ENCODE measurements at regions of chr1 and their contacts with region 1.

Region 1: DNA sequence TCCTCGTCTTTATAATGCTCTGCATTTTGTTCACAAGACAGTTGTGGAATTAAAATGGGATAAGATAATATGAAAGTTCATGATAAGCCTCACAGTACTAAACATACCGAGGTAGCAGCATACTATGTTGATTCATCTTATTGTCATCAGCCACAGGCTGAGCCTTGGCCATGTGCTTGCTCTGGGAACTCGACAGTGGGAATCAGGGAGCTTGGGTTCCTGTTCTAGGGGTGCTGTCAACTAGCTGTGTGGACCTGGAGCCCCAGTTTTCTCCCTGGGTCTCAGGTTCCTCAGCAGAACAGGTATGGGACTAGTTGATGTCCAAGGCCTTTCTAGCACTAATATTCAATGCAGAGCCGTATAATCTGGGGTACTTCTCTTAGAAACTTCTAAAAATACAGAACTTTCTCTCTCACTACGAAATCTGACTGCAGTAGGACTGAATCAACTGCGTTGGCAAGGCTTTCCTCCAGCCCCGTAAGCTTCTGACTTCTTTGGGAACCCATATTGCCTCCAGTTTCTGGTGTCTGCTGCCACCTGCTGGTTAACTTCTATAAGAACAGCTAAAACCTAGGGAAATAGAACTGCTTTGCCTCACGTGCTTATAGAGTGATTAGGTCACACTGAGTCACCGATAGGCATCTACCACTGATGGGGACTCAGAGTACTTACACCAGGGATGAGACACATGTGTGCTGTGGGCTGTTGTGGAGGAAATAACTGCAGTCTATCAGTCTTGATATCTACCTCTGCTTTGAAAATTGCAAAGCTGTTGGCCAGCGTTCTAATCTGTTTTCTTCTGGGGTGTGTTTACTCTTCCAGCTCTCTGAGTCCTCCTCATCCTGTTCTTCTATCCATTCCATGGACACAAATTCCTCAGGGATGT is 110.9 kb downstream of the RGL1 start:
- DNase-seq: peak; percentile 83
- H3K4me3 Mint-ChIP-seq: no peak overlapping the region
- H3K27ac Mint-ChIP-seq: peak overlapping the region; percentile 46
- H3K4me1 Mint-ChIP-seq: peaks cover 13% of the 10 kb centered on the region
- H3K27me3 Mint-ChIP-seq: no peaks in the 10 kb centered on the region

Region 2: DNA sequence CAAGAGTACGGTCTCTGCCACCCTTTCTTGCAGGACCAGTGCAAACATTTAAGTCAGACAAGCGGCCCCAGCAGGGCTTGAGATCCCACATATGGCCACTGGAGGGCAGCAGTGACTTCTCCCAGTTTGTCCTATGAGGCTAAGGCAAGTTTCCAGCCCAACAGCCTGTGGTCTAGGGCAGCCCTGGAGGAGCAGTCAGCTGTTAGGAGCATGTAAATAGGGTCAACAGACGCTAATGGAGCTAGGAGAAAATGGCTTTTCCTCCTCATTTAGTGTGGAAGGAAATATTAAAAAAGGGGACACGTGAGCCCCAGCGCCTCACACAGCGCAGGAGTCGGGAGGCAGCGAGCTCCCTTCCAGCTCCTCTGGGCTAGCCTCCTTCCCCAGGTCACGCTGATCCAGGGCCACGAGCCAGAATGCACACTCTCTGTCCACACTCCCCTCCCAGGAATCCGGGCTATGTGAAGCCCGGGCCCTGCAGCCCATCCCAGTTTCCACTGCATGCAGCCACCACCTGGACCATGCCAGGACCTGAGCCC is 634.2 kb before region 1 on chr1:
- CTCF ChIA-PET with region 1: interaction called, 4 read pairs
- POLR2A ChIA-PET with region 1: no interaction called
- intact Hi-C with region 1: loop called (anchors 1 kb)
- DNase-seq: peak; percentile 86
- H3K4me3 Mint-ChIP-seq: no peak overlapping the region
- H3K27ac Mint-ChIP-seq: no peak overlapping the region
- H3K4me1 Mint-ChIP-seq: no peaks in the 10 kb centered on the region
- H3K27me3 Mint-ChIP-seq: peaks cover 5% of the 10 kb centered on the region

Region 3: DNA sequence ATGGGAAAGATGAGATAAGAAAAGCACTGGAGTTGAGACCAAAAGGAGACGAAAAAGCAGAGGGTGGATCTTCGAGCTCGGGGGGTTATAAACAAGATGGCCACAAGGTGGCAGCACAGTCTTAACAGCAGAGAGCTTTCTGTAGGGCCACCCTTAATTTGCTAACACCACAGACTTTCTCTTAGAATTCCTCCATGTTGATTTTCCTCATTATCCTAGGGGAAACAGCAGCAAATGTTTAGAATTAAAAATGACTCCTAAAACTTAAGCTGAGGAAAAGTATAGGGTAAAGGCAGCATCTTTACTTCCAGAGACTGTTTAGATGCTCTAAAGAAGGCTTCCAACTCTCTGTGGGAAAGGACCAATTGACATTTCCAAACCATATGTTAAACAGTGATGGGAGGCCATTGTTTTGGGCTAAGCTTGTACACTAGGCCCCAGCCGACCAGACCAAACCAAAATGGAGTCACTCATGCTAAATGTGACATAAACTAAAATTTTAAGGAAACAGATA is 260.2 kb before region 1 on chr1:
- CTCF ChIA-PET with region 1: interaction called, 171 read pairs
- POLR2A ChIA-PET with region 1: interaction called, 5 read pairs
- intact Hi-C with region 1: loop called (anchors 1 kb)
- DNase-seq: peak; percentile 81
- H3K4me3 Mint-ChIP-seq: no peak overlapping the region
- H3K27ac Mint-ChIP-seq: no peak overlapping the region
- H3K4me1 Mint-ChIP-seq: peaks cover 33% of the 10 kb centered on the region
- H3K27me3 Mint-ChIP-seq: no peaks in the 10 kb centered on the region

Region 4: DNA sequence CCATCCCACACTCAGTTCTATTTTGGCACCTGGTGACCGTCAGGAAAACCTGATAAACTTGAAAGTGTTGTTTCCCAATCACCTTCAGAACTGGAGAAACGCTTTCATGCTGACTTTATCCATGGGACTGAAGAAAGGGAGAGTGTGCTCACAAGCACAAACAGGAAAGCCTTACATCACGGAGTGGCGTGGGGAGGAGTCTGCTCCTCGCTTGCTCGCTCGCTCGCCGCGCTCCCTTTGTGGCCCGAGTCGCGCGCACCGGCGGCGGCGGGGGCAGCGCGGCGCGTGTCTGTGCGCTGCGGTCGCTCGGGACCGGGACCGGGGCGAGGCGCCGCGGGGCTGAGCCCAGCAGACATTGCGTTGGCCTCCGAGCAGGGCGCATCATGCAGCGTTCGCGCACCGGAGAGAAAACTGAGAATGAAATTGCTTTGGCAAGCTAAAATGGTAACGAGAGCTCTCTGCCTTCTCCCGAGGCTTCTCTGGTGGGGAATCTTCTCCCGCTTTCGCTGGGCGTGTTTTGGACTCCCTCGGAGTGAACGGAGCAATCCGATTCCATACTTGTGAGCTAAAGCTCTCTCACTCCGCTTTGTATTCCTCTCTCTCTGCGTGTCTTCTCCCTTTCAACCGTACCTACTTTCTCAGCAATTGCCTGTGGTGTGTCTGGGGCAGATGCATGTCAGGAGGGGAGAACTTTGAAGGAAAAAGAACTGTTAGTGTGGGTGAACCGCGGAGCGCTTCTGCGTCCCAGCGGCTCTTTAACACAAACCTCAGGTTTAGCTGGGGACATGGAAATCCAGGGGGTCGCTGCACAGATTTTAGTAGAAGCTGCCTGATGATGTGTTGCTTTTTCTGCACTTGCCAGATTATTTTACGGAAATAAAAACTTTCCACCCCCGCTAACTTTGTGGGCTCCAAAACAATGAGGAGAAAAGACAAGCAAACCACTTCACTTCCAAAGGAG is 110.7 kb before region 1 on chr1 and contains the start of gene RGL1:
- CTCF ChIA-PET with region 1: interaction called, 3 read pairs
- POLR2A ChIA-PET with region 1: no interaction called
- intact Hi-C with region 1: loop called (anchors 5 kb)
- DNase-seq: peak; percentile 40
- H3K4me3 Mint-ChIP-seq: peak within 1 kb of the TSS; percentile 78
- H3K27ac Mint-ChIP-seq: no peak within 1 kb of the TSS
- H3K4me1 Mint-ChIP-seq: peaks cover 6% of the 10 kb centered on the region
- H3K27me3 Mint-ChIP-seq: peaks cover 3% of the 10 kb centered on the region
- total RNA-seq, gene RGL1: 1.8 TPM

Region 5: DNA sequence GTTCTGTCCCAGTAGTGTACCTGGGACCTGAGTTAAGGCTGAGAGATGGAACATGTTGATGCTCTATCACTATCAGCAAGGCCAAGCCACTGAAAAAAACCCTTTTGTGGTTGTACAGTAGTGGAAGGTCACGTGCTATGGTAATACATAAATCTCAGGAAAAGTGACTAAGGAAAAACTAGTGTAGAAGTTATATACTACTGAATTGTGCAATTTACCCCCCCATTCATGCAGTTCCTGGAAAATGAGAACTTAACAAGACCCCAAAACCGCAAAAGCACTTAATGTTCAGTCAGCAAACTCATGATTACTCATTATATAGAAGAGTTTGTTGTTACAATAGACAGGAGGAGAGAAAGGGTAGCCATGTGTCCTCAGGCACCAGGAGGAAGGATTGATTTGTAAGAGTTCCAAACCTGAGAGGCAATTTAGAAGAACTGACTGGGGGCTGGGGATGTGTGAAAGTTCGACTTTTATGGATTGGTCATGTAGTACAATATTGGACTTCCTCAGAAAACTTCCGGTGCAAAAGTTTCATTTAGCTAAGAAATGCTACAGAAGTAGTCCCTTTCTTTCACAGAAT is 19.3 kb before region 1 on chr1:
- CTCF ChIA-PET with region 1: interaction called, 17 read pairs
- POLR2A ChIA-PET with region 1: interaction called, 4 read pairs
- intact Hi-C with region 1: no loop called
- DNase-seq: no peak
- H3K4me3 Mint-ChIP-seq: no peak overlapping the region
- H3K27ac Mint-ChIP-seq: no peak overlapping the region
- H3K4me1 Mint-ChIP-seq: peaks cover 10% of the 10 kb centered on the region
- H3K27me3 Mint-ChIP-seq: no peaks in the 10 kb centered on the region

Region 6: DNA sequence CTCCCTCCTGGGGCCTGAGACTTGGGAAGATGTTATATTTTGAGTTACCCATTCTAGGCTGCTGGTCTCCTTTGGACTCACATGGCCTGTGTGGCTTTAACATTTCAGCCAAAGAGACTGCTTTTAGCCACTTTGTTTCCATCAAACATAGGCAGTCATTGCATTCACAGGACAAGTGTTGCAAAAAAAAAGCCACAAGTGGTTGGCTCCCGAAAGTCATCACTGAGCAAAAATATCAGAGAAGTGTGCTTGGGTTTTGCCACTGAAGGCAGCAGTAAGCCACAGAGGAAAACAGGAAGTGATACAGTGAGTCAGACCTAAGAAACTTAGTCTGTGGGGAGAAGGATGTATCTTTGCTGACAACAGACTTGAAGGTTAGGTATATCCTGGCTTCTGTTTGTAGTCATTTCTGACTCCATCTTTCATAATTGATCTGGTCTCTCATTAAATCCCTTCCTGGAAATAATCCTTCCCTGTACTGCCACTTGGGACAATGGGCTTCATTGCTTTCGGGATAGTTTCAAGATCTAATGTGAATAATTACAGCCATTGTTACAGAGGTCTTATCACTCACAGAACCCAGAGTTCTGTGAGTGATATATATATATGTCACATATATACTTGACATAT is 40.8 kb after region 1 on chr1:
- CTCF ChIA-PET with region 1: interaction called, 22 read pairs
- POLR2A ChIA-PET with region 1: interaction called, 3 read pairs
- intact Hi-C with region 1: loop called (anchors 1 kb)
- DNase-seq: peak; percentile 72
- H3K4me3 Mint-ChIP-seq: no peak overlapping the region
- H3K27ac Mint-ChIP-seq: no peak overlapping the region
- H3K4me1 Mint-ChIP-seq: peaks cover 17% of the 10 kb centered on the region
- H3K27me3 Mint-ChIP-seq: no peaks in the 10 kb centered on the region